ENCODE measurements at regions of chr20 and their contacts with region 1.

Region 1: DNA sequence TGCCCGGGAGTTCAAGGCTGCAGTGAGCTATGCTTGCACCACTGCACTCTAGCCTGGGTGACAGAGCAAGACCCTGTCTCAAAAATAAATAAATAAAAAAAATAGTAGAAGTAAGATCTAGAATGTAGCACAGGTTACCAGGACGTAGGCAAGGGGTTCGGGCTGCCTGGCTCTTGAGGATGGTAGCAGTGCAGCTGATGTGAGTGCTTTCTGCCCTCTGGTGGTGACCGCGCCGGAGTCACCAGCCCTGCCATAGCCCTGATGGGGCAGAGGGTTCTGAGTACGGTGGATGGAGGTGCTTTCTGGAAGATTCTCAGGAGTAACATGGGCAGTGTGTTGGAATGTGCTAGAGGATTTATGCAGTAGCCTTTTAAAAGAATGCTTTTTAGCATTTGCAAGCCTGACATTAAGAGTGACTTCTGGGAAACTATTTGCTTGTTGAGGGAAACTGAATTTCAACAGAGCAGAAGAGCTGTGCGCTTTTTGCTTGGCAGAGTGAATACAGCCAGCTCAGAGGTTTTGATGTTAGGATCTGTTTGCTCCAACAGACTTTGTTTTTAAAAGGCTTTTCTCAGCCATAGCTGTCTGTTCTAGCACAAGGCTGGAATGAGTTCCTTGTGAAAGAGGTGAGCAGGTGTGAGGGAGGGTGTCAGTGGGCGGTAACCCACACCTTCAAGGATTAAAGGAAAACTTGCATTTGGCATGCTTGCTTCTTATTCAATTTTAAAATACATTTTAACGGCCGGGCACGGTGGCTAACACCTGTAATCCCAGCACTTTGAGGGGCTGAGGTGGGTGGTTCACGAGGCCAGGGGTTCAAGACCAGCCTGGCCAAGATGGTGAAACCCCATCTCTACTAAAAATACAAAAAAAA is 65.9 kb downstream of the PTPN1 start:
- DNase-seq: no peak
- H3K4me3 ChIP-seq: no peak overlapping the region
- CTCF ChIP-seq: peak; percentile 89

Region 2: GRCh38 chr20:50189681-50190582 is 386.2 kb before region 1 on chr20:
- CTCF ChIA-PET with region 1: interaction called, 30 read pairs
- POLR2A ChIA-PET with region 1: interaction called, 6 read pairs
- DNase-seq: no peak
- H3K4me3 ChIP-seq: peak overlapping the region; percentile 94
- CTCF ChIP-seq: peak; percentile 92

Region 3: GRCh38 chr20:50467718-50468356 is 108.2 kb before region 1 on chr20:
- CTCF ChIA-PET with region 1: interaction called, 72 read pairs
- POLR2A ChIA-PET with region 1: no interaction called
- DNase-seq: no peak
- H3K4me3 ChIP-seq: no peak overlapping the region
- CTCF ChIP-seq: no peak

Region 4: GRCh38 chr20:50504231-50504823 is 71.8 kb before region 1 on chr20:
- CTCF ChIA-PET with region 1: interaction called, 24 read pairs
- POLR2A ChIA-PET with region 1: no interaction called
- DNase-seq: no peak
- H3K4me3 ChIP-seq: no peak overlapping the region
- CTCF ChIP-seq: no peak

Region 5: GRCh38 chr20:50518270-50518721 is 57.8 kb before region 1 on chr20:
- CTCF ChIA-PET with region 1: interaction called, 13 read pairs
- POLR2A ChIA-PET with region 1: no interaction called
- DNase-seq: no peak
- H3K4me3 ChIP-seq: peak overlapping the region; percentile 35
- CTCF ChIP-seq: no peak

Region 6: DNA sequence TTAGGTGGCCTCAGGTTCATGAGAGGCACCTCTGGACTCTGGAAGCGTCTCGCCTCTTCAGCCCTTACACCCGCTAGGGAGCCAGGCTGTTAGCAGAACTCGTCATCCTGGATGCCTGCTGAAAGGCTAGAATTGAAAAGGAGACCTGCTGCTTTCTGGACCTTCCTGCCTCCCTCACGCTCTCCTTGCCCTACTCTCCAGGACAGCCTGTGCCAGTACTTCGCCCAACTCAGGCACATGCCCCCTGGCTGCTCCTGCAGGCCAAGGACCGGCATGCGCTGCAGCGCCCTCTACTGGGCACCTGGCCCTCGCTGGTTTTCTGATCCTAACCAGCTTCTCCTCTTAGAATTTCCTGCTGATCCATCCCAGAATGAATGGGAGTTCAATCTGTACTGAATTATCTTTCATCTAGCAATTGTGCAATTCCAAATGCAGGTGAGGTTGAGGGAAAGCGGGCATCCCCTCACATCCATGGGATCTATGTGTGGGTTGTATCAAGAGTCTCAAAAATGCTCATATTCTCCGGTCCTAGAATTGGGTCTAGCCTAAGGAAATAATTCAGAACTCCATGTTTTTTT is 12.0 kb after region 1 on chr20:
- CTCF ChIA-PET with region 1: interaction called, 113 read pairs
- POLR2A ChIA-PET with region 1: no interaction called
- DNase-seq: no peak
- H3K4me3 ChIP-seq: no peak overlapping the region
- CTCF ChIP-seq: peak; percentile 94

Region 7: DNA sequence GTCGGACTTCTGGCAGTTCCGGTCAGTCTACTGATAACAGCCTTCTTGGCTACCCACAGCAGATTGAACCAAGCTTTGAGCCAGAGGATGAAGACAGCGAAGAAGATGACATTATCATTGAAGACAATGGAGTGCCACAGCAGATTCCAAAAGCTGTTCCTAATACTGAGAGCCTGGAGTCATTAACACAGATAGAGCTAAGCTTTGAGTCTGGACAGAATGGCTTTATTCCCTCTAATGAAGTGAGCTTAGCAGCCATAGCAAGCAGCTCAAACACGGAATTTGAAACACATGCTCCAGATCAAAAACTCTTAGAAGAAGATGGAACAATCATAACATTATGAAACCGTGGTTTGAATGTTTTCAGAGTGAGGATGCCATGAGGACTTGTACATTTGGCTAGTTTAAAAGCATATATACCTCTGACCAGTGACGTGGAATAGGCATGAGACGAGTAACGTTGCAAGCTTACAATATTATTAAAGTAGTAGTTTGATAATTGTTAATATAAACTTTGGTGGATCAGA is 174.1 kb after region 1 on chr20:
- CTCF ChIA-PET with region 1: interaction called, 15 read pairs
- POLR2A ChIA-PET with region 1: no interaction called
- DNase-seq: no peak
- H3K4me3 ChIP-seq: no peak overlapping the region
- CTCF ChIP-seq: no peak

Measured in AG04449 (cell line).